ENCODE measurements at regions of chr2 and their contacts with region 1.

Region 1: GRCh38 chr2:23460228-23460627 is 75.2 kb downstream of the KLHL29 start:
- DNase-seq: no peak
- ATAC-seq: peak; percentile 57
- H3K4me3 ChIP-seq: no peak overlapping the region
- H3K27ac ChIP-seq: no peak overlapping the region
- H3K4me1 ChIP-seq: no peaks in the 10 kb centered on the region
- H3K27me3 ChIP-seq: peaks cover 2 to 11% of the 10 kb centered on the region in 2 experiments; a peak in 3 of 5 replicates
- CTCF ChIP-seq: peak; percentile 50
- EP300 ChIP-seq: no peak
- POLR2A ChIP-seq: no peak
- RAD21 ChIP-seq: no peak

Region 2: DNA sequence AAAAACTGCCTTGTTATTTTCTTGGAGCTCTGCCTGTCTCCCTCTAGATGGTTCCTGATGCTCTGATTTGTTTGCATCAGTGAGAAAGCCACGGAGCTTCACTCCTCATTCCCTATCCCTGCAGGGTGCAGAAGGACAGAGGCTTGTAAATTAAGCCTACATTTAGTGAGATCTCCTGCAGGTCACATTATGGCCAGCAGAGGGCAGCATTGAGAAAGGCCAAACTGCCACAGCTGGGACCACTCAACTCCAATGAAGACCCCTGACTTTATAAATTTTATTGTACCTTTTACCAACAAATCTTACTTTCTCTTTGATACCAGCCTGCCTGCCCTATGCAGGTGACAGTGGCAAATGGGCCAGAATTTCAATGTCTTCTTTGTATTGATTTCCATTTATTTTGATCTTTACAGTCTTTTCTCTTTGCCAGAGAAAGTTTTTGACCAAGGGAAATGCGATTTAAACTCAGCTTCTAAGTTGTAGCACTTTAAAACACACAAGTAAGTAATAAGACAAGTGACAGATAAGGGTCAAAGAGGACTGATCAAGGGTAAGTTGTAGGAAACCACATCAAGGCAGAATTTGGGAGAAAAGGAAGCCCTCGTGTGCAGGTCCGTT is 1104.3 kb before region 1 on chr2:
- CTCF ChIA-PET with region 1: no interaction called
- POLR2A ChIA-PET with region 1: no interaction called
- in situ Hi-C with region 1: no loop called
- intact Hi-C with region 1: loop called (anchors 5 kb)
- DNase-seq: peak; percentile 33
- ATAC-seq: peak; percentile 80
- H3K4me3 ChIP-seq: no peak overlapping the region
- H3K27ac ChIP-seq: no peak overlapping the region
- H3K4me1 ChIP-seq: no peaks in the 10 kb centered on the region
- H3K27me3 ChIP-seq: no peaks in the 10 kb centered on the region
- CTCF ChIP-seq: peak; percentile 77
- EP300 ChIP-seq: no peak
- POLR2A ChIP-seq: no peak
- RAD21 ChIP-seq: no peak

Region 3: DNA sequence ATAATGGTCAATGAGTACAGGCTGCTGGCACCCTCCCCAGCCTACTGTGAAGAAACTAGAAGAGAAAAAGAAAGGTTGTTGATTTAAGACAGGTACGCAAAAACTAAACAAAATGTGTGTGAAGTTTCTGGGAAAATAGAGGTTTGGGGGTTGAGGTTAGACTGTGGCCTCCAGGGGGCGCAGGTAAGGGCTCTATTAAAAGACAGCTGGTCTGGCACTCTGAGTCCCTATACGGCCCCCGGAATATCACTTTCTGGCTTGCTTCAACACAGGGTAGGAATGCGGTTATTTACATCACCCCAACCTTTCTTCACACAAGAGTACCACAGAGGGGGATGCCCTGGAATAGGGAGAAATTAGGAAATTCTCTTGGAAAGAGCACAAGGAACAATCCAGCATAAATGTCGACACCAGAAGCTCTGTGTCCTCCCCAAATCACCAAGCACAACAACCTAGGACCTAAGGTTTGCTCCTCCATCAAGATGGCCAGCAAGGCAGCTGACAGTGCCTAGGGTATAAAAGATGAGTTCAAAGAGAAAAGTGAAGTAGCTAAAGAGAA is 556.0 kb before region 1 on chr2:
- CTCF ChIA-PET with region 1: no interaction called
- POLR2A ChIA-PET with region 1: no interaction called
- in situ Hi-C with region 1: no loop called
- intact Hi-C with region 1: loop called (anchors 10 kb)
- DNase-seq: peak; percentile 10
- ATAC-seq: peak; percentile 80
- H3K4me3 ChIP-seq: no peak overlapping the region
- H3K27ac ChIP-seq: no peak overlapping the region
- H3K4me1 ChIP-seq: no peaks in the 10 kb centered on the region
- H3K27me3 ChIP-seq: no peaks in the 10 kb centered on the region
- CTCF ChIP-seq: peak; percentile 59
- EP300 ChIP-seq: no peak
- POLR2A ChIP-seq: no peak
- RAD21 ChIP-seq: no peak

Region 4: DNA sequence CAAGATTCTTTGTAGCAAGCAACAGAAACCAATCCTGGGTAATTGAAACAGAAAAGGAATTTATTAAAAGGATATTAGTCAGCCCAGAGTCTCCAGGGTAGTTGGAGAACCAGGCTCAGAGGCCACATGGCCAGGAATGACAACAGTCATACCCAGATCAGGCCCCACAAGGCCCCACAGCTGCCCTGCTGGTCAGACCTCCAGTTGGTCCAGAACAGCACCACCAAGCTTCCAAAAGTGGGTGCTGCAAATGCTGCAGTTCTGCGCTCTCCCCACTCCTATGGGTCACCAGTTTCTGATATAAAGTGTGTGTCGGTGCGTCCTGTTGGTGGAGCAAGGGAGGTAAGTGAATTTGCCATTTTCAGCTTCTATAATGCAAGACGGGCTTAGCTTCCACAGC is 45.4 kb before region 1 on chr2:
- CTCF ChIA-PET with region 1: no interaction called
- POLR2A ChIA-PET with region 1: no interaction called
- in situ Hi-C with region 1: no loop called
- intact Hi-C with region 1: no loop called
- DNase-seq: peak; percentile 21
- ATAC-seq: peak; percentile 85
- H3K4me3 ChIP-seq: no peak overlapping the region
- H3K27ac ChIP-seq: no peak overlapping the region
- H3K4me1 ChIP-seq: no peaks in the 10 kb centered on the region
- H3K27me3 ChIP-seq: peaks cover 0 to 1% of the 10 kb centered on the region in 2 experiments; a peak in 1 of 5 replicates
- CTCF ChIP-seq: peak; percentile 33
- EP300 ChIP-seq: no peak
- POLR2A ChIP-seq: no peak
- RAD21 ChIP-seq: no peak